Transverse colon (tissue), 4 donors: ENCODE measurements at regions of chr16 and their contacts with region 1.

Region 1: DNA sequence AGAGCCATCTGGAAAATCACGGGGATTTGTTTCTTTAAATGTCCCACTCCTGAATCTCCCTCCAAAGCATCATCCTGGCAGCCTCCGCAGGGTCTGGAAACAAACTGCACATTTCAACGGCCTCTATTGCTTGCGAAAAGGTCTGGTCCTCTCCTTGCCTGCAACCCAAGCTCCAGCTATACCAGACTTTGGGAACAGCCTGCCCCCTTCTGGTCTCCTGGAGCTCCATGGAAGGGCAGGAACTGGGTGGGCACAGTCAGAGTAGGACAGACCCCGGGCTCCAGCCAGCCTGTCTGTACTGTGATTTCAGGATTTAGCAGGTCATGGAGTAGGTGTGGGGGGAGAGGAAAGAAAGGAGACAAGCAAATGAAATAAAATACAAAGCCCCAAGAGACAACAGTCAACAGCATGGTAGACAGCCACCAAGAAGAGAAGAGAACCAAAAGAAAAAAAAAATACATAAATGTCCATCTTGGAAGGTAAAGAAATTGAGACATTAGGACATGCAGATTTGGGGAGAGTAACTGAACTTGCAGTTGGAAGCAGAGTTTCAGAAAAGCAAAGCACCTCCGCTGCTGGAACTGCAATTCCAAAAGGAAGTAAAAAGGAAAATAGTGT is 2.7 kb downstream of the XYLT1 start:
- DNase-seq: peak; percentile 80
- H3K4me3 ChIP-seq: peak overlapping the region in 3 of 4 donors; percentile 73 to 93 (median 76)
- H3K27ac ChIP-seq: peak overlapping the region in 3 of 4 donors; percentile 79 to 89 (median 89)
- H3K4me1 ChIP-seq: peaks cover 16 to 43% (median 31%) of the 10 kb centered on the region in 4 donors
- H3K27me3 ChIP-seq: no peaks in the 10 kb centered on the region
- CTCF ChIP-seq: peak; percentile 62 to 82 (median 64)
- EP300 ChIP-seq: no peak
- POLR2A ChIP-seq: no peak

Region 2: DNA sequence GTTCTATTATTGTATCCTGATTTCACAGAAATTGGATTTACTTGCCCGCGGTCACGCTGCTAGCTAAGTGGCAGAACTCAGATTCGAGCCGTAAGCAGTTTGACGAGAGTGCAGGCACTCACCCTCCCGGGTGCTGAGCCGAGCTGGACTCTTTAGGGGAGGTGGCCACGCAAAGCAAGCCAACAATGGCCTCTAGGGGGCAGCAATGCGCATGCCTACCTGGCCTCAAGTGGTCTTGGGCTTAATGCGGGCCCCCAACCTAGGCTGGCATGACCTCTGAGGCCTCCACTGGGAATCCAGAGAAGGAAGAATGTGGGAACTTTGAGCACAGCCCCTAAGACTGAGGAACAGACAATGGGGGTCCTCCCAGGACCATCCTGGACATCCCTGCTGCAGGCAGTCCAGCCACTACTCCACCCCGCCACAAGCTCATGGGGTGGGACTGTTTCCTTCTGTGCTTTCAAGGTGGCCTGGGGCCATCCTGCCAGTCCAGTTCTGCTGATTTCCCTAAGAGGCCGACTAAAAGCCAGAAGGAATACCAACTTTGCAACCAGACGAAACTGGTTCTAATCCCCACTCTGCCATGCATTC is 273.7 kb before region 1 on chr16:
- in situ Hi-C with region 1: loop called in 2 of 4 experiments (anchors 10 kb)
- intact Hi-C with region 1: loop called (anchors 10 kb)
- DNase-seq: peak; percentile 65
- H3K4me3 ChIP-seq: no peak overlapping the region
- H3K27ac ChIP-seq: no peak overlapping the region
- H3K4me1 ChIP-seq: no peaks in the 10 kb centered on the region
- H3K27me3 ChIP-seq: no peaks in the 10 kb centered on the region
- CTCF ChIP-seq: peak; percentile 68 to 86 (median 72)
- EP300 ChIP-seq: no peak
- POLR2A ChIP-seq: no peak

Region 3: DNA sequence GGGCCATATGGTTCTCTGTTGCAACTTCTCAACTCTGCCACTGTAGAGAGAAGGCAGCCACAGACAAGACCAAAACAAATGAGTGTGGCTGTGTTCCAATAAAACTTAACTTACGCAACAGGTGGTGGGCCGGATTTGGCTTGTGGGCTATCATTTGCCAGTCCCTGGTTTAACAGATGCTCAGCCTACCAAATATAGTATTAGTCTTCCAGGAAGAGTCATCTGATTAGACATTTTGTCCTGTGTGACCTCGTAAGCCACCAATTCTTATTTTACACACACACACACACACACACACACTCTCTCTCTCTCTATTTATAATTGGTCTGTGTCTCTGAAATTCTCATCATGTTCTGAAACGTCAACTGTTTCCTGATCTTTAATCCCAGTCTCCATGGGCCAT is 243.2 kb before region 1 on chr16:
- in situ Hi-C with region 1: loop called in 1 of 4 experiments (anchors 25 kb)
- intact Hi-C with region 1: no loop called
- DNase-seq: peak; percentile 66
- H3K4me3 ChIP-seq: no peak overlapping the region
- H3K27ac ChIP-seq: peak overlapping the region; percentile 65 to 85 (median 70)
- H3K4me1 ChIP-seq: peaks cover 12 to 25% (median 19%) of the 10 kb centered on the region in 4 donors
- H3K27me3 ChIP-seq: no peaks in the 10 kb centered on the region
- CTCF ChIP-seq: no peak
- EP300 ChIP-seq: peak; percentile 55
- POLR2A ChIP-seq: no peak

Region 4: GRCh38 chr16:17277977-17278381 is 190.1 kb before region 1 on chr16:
- in situ Hi-C with region 1: loop called in 2 of 4 experiments (anchors 10 to 25 kb)
- intact Hi-C with region 1: no loop called
- DNase-seq: peak; percentile 70
- H3K4me3 ChIP-seq: no peak overlapping the region
- H3K27ac ChIP-seq: peak overlapping the region; percentile 53 to 87 (median 80)
- H3K4me1 ChIP-seq: peaks cover 20 to 44% (median 35%) of the 10 kb centered on the region in 4 donors
- H3K27me3 ChIP-seq: no peaks in the 10 kb centered on the region
- CTCF ChIP-seq: peak; percentile 41 to 69 (median 51)
- EP300 ChIP-seq: no peak
- POLR2A ChIP-seq: peak; percentile 15

Region 5: GRCh38 chr16:17301593-17302135 is 166.4 kb before region 1 on chr16:
- in situ Hi-C with region 1: no loop called
- intact Hi-C with region 1: loop called (anchors 10 kb)
- DNase-seq: peak; percentile 55
- H3K4me3 ChIP-seq: no peak overlapping the region
- H3K27ac ChIP-seq: peak overlapping the region; percentile 76 to 88 (median 86)
- H3K4me1 ChIP-seq: peaks cover 29 to 57% (median 46%) of the 10 kb centered on the region in 4 donors
- H3K27me3 ChIP-seq: no peaks in the 10 kb centered on the region
- CTCF ChIP-seq: no peak
- EP300 ChIP-seq: no peak
- POLR2A ChIP-seq: no peak

Region 6: DNA sequence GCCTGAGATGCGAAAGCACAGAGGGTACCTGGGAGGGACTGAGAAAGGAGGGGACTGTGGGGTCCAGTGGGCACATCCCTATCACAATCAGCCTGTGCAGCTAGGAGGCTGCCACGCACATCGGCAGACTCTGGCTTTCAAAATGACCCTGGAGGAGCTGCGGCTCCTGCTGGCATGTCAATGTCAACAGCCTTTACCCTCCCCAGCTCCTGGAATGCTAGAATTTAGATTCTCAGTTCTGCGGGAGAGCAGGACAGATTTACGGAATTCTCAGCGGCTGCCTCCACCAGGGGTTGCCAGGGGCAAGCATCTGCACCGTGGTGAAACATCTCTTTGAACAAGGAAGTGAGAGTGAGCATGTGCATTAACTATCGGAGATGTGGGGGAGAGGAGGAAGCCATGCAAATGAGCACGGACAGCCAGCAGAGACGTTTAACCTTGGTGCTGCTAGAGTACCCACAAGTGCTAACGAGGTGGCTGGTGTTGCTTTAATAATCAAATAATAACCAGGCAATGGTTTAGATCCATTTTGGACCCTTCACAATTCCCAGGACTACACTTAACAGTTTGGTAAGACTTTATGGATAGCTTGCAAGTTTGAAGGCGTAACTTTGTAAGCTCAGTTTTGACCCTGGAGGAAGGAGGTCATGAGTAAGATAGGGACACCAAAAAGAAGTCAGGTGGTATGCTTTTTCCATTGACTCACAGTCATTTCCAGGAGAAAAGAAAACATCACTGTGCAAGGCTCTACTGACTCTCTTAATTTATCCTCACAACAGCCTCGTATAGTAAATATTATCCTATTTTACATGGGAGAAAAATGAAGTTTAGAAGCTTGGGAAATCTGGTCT is 51.3 kb before region 1 on chr16:
- in situ Hi-C with region 1: no loop called
- intact Hi-C with region 1: loop called (anchors 10 kb)
- DNase-seq: peak; percentile 60
- H3K4me3 ChIP-seq: peak overlapping the region in 1 of 4 donors; percentile 1
- H3K27ac ChIP-seq: peak overlapping the region; percentile 23 to 60 (median 50)
- H3K4me1 ChIP-seq: peaks cover 0 to 17% (median 3%) of the 10 kb centered on the region in 4 donors
- H3K27me3 ChIP-seq: no peaks in the 10 kb centered on the region
- CTCF ChIP-seq: no peak
- EP300 ChIP-seq: no peak
- POLR2A ChIP-seq: peak; percentile 16

Region 7: GRCh38 chr16:17724242-17724898 is 256.3 kb after region 1 on chr16:
- in situ Hi-C with region 1: no loop called
- intact Hi-C with region 1: no loop called
- DNase-seq: no peak
- H3K4me3 ChIP-seq: no peak overlapping the region
- H3K27ac ChIP-seq: no peak overlapping the region
- H3K4me1 ChIP-seq: no peaks in the 10 kb centered on the region
- H3K27me3 ChIP-seq: no peaks in the 10 kb centered on the region
- CTCF ChIP-seq: no peak
- EP300 ChIP-seq: no peak
- POLR2A ChIP-seq: no peak